ENCODE measurements at regions of chr7 and their contacts with region 1.

Region 1: GRCh38 chr7:114865564-114865963 is 56.3 kb upstream of the MDFIC start:
- DNase-seq: peak; percentile 74
- H3K4me3 Mint-ChIP-seq: no peak overlapping the region
- H3K27ac Mint-ChIP-seq: no peak overlapping the region
- H3K4me1 Mint-ChIP-seq: peaks cover 7% of the 10 kb centered on the region
- H3K27me3 Mint-ChIP-seq: no peaks in the 10 kb centered on the region

Region 2: DNA sequence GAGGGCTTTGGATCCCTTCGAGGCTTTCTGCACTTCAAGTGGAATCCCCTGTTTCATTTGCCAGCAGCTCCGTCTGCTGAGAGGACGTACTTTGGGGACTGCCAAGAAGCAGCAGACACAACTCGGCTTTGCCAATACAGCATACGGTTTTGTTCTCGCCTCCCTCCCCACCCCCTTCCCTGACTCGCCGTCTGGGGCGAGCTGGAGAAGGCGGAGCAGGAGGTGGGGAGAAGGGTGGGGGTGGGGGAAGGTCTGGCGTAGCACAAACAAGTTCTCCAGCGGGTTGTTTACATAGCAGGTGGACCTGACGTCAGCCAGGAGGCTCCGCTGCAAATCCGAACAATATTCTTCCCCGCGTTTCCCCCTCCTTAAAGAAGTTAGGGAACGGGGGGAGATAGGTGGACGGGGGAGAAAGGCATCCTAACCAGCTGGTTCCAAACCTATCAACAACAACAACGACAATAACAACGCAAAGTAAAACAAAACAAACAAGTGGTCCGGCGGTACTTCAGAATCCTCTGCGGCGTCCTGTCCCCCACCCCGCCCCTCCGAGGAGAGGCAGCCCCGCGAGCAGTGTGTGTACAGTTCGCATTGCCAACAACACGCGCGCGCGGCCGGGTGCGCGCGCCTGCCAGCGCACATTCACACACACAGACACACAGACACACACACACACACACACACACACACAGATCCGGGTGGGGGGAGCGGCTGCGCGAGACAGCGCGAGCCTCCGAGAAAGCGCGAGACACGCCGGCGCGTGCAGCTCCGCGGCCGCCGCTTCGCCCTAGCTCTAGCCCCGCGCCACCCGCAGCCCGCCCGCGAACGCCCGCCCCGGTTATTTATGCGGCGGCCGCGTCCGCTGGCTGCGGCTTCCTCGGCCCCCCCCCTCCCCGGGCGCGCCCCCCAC is 779.7 kb before region 1 on chr7:
- CTCF ChIA-PET with region 1: interaction called, 5 read pairs
- POLR2A ChIA-PET with region 1: no interaction called
- intact Hi-C with region 1: loop called (anchors 5 kb)
- DNase-seq: peak; percentile 52
- H3K4me3 Mint-ChIP-seq: peak overlapping the region; percentile 77
- H3K27ac Mint-ChIP-seq: no peak overlapping the region
- H3K4me1 Mint-ChIP-seq: peaks cover 38% of the 10 kb centered on the region
- H3K27me3 Mint-ChIP-seq: peaks cover 59% of the 10 kb centered on the region

Region 3: DNA sequence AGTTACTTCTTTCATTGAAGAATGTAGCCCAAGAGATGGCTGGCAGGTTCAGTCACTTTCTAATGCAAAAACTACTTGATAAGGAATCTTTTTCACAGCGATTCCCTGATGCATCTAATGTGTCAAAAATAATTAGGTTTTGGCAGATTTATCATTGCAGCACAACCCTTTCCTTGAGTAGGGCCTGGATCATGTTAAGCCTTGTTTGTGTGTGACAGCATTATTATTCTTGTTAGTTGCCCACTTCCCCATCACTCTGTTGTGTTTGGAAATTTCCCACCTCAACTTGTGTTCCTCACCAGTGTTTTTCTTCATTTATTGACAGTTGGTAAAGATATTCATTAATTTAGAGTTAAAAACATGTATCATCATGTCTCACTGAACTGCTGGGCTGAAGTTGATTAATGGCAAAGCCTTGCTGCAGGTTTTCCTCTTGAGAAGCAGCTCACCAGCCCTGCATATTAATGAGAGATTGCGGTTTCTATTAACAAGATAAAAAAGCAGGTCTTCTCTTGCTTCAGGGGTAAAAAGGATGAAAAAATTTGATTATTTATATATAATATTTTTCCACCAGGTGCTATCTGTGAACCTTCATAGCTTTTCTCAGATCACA is 177.0 kb before region 1 on chr7:
- CTCF ChIA-PET with region 1: no interaction called
- POLR2A ChIA-PET with region 1: no interaction called
- intact Hi-C with region 1: no loop called
- DNase-seq: no peak
- H3K4me3 Mint-ChIP-seq: no peak overlapping the region
- H3K27ac Mint-ChIP-seq: no peak overlapping the region
- H3K4me1 Mint-ChIP-seq: no peaks in the 10 kb centered on the region
- H3K27me3 Mint-ChIP-seq: peaks cover 1% of the 10 kb centered on the region

Region 4: GRCh38 chr7:114922016-114922651 is 56.6 kb after region 1 on chr7 and contains the start of gene MDFIC:
- CTCF ChIA-PET with region 1: interaction called, 21 read pairs
- POLR2A ChIA-PET with region 1: interaction called, 3 read pairs
- intact Hi-C with region 1: loop called (anchors 2 kb)
- DNase-seq: peak; percentile 84
- H3K4me3 Mint-ChIP-seq: peak within 1 kb of the TSS; percentile 87
- H3K27ac Mint-ChIP-seq: peak within 1 kb of the TSS; percentile 93
- H3K4me1 Mint-ChIP-seq: peaks cover 63% of the 10 kb centered on the region
- H3K27me3 Mint-ChIP-seq: no peaks in the 10 kb centered on the region
- total RNA-seq, gene MDFIC: 78.0 to 82.3 TPM

Region 5: DNA sequence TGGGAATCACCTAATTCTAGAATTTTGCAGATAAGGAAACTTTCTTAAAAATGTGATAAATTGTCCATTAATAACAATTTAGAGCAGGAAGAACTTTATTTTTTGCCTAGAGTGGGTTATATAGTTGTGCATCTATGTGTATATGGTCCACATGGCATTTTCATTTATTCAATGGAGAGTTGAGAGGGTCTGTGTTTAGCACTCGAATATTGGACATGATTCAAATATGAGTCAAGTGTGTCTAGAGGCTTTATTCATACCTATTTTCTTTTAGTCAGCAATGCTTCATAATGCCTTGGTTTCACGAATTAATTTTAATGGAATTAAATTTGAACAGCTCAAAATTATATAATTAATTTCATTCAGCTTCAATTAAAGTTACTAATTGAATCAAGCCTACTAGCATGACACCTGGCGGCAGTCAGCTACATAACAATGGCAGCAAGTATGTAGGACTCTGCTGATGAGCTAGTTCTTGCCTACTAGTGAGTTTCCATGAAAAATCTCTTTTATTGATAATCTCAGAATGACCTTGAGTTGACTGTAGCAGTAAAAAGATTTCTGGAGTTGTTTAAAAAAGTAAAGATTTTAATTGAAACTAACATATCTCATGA is 74.0 kb after region 1 on chr7:
- CTCF ChIA-PET with region 1: interaction called, 38 read pairs
- POLR2A ChIA-PET with region 1: interaction called, 3 read pairs
- intact Hi-C with region 1: loop called (anchors 2 kb)
- DNase-seq: peak; percentile 46
- H3K4me3 Mint-ChIP-seq: no peak overlapping the region
- H3K27ac Mint-ChIP-seq: no peak overlapping the region
- H3K4me1 Mint-ChIP-seq: peaks cover 85% of the 10 kb centered on the region
- H3K27me3 Mint-ChIP-seq: no peaks in the 10 kb centered on the region

Region 6: GRCh38 chr7:115475761-115476385 is 610.3 kb after region 1 on chr7:
- CTCF ChIA-PET with region 1: interaction called, 7 read pairs
- POLR2A ChIA-PET with region 1: no interaction called
- intact Hi-C with region 1: loop called (anchors 1 kb)
- DNase-seq: peak; percentile 28
- H3K4me3 Mint-ChIP-seq: no peak overlapping the region
- H3K27ac Mint-ChIP-seq: no peak overlapping the region
- H3K4me1 Mint-ChIP-seq: peaks cover 11% of the 10 kb centered on the region
- H3K27me3 Mint-ChIP-seq: peaks cover 22% of the 10 kb centered on the region

Region 7: DNA sequence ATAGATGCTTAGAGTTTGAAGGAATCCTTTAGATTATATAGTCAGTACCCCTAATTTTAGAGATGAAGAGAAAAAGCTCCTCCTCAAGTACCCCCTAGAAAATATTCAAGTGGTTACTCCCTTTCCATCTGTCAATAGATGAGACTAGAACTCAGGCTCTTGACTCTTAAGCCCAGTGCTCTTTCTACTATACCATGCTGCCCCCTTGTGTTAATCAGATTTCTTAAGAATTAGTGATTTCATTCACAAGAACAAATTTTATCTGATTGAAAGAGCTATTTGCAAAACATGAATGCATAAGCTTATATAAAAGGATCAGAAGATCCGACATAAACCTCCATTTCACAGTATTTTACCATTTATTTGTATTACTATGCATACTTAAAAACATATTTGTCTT is 985.7 kb after region 1 on chr7:
- CTCF ChIA-PET with region 1: interaction called, 3 read pairs
- POLR2A ChIA-PET with region 1: no interaction called
- intact Hi-C with region 1: loop called (anchors 5 kb)
- DNase-seq: no peak
- H3K4me3 Mint-ChIP-seq: no peak overlapping the region
- H3K27ac Mint-ChIP-seq: no peak overlapping the region
- H3K4me1 Mint-ChIP-seq: no peaks in the 10 kb centered on the region
- H3K27me3 Mint-ChIP-seq: peaks cover 6% of the 10 kb centered on the region

Region 8: GRCh38 chr7:116122972-116123595 is 1257.5 kb after region 1 on chr7:
- CTCF ChIA-PET with region 1: no interaction called
- POLR2A ChIA-PET with region 1: no interaction called
- intact Hi-C with region 1: loop called (anchors 5 kb)
- DNase-seq: no peak
- H3K4me3 Mint-ChIP-seq: no peak overlapping the region
- H3K27ac Mint-ChIP-seq: no peak overlapping the region
- H3K4me1 Mint-ChIP-seq: no peaks in the 10 kb centered on the region
- H3K27me3 Mint-ChIP-seq: peaks cover 6% of the 10 kb centered on the region

Measured in activated CD4-positive, alpha-beta memory T cell treated with anti-CD3 and anti-CD28 coated beads for 36 hours (primary cell).